ENCODE measurements at regions of chr3 and their contacts with region 1.

Region 1: DNA sequence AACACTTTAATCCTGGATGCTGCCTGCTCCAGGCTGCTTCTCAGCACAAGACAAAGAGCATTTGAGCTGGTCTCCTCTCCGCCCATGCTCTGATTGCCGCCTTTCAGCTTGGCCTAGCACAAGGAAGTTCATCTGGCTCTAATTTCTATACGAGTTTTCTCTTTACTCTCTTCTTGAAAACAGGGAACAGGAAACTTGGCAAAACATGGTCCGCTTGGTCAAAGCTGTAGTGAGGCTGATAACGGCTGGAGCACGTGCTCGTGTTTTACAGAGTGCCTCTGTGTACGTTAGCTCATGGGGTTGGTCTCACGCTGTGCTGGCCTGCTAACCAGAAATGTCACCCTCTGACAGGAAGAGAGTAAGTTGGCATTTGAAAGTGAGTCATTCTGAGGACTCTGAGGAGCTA is 19.2 kb downstream of the RARRES1 start:
- DNase-seq: no peak
- H3K4me3 Mint-ChIP-seq: no peak overlapping the region
- H3K27ac Mint-ChIP-seq: peak overlapping the region; percentile 77
- H3K4me1 Mint-ChIP-seq: peaks cover 35% of the 10 kb centered on the region
- H3K27me3 Mint-ChIP-seq: no peaks in the 10 kb centered on the region

Region 2: GRCh38 chr3:158727206-158728060 is 14.3 kb after region 1 on chr3:
- intact Hi-C with region 1: loop called (anchors 1 kb)
- DNase-seq: peak; percentile 31
- H3K4me3 Mint-ChIP-seq: peak overlapping the region; percentile 61
- H3K27ac Mint-ChIP-seq: peak overlapping the region; percentile 61
- H3K4me1 Mint-ChIP-seq: peaks cover 44% of the 10 kb centered on the region
- H3K27me3 Mint-ChIP-seq: no peaks in the 10 kb centered on the region